A549 (cell line): ENCODE measurements at regions of chr6 and their contacts with region 1.

Region 1: DNA sequence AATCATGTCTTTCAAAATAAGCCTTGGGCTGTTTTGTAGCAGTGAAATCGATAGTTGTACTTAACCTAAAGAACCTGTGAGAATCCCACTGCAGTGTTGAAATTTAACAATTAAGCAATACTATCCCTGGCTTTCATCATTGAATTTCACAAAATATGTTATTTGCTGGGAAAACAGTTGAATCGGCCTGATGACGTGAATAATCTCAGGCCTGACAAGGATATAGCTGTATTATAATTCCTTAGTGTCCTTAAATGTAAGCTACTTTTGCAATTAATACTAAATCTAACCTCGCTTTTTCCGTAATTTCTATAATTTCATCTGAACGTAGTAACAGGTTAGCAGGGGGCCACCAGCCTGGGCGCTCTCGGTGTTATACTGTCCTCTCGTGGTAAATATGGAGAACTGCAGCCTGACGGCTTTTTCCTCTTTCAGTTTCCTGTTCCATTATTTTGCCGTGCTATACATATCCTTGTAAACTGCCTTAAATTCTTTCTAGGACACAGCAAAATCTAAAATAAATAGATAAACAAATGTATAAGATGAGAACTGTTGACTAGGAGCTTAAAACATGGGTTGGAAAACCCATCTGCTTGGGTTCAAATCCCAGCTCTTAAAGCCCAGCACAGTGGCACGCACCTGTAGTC is 24.0 kb downstream of the MTFR2 start:
- DNase-seq: peak; percentile 45 to 67
- ATAC-seq: peak; percentile 83 to 86
- H3K4me3 ChIP-seq: peak overlapping the region; percentile 30; the same call in 1 of the 3 replicates
- H3K27ac ChIP-seq: peak overlapping the region; percentile 87 to 93
- H3K4me1 ChIP-seq: peaks cover 22% of the 10 kb centered on the region
- CTCF ChIP-seq: peak; percentile 98
- EP300 ChIP-seq: peak; percentile 47 to 73; a peak in 3 of 5 replicates
- POLR2A ChIP-seq: no peak
- RAD21 ChIP-seq: peak; percentile 99

Region 2: GRCh38 chr6:135497412-135498269 is 728.5 kb before region 1 on chr6 and contains the start of gene AHI1:
- CTCF ChIA-PET with region 1: interaction called, 24 read pairs
- POLR2A ChIA-PET with region 1: no interaction called
- DNase-seq: peak; percentile 59 to 93
- ATAC-seq: peak; percentile 96 to 97
- H3K4me3 ChIP-seq: peak within 1 kb of the TSS; percentile 67
- H3K27ac ChIP-seq: peak within 1 kb of the TSS; percentile 93 to 95
- H3K4me1 ChIP-seq: peaks cover 12% of the 10 kb centered on the region; the same call in 2 of the 3 replicates
- CTCF ChIP-seq: no peak
- EP300 ChIP-seq: no peak
- POLR2A ChIP-seq: peak; percentile 78
- RAD21 ChIP-seq: no peak
- polyA plus RNA-seq, gene AHI1: 38.3 and 50.8 TPM in 2 replicates

Region 3: DNA sequence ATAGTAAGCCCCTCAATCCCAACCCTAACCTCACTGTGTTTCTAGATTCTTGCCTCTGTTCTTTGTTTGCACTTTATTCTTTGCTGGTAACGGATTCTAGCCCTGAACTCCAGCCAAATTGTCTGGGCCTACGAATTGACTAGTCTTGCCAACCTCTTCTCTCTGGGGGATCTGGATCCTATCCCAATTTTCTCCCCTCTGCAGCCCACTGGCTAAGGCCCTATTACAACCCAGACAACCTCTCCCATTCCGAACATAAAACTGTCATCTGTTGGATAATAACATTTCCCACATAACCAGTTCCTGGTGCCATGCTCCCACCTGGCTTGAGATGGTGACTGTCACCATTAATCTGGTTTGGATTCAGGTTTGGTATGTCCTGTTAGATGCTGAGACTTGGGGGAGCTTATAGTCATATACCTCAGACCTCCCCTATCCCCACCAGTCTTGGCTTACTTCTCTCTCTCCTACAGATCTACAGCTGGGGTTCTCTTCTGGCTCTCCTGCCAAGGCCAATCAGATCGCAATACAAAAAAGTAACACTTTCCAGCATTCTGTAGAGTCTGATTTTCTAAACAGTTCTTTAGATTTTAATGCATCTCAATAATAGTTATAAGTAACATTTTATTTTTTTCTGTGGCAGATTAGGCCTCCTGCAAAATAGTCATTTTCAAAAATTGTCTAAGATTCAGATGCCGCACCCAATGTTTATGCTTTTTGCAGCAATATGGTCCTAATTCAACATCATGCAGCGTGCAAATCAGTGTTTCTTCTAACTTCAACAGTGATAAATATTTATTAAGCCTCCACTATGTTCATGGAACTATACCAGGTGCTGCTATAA is 698.8 kb before region 1 on chr6:
- CTCF ChIA-PET with region 1: interaction called, 12 read pairs
- POLR2A ChIA-PET with region 1: no interaction called
- DNase-seq: no peak
- ATAC-seq: no peak
- H3K4me3 ChIP-seq: no peak overlapping the region
- H3K27ac ChIP-seq: no peak overlapping the region
- H3K4me1 ChIP-seq: peaks cover 12% of the 10 kb centered on the region; the same call in 2 of the 3 replicates
- CTCF ChIP-seq: no peak
- EP300 ChIP-seq: no peak
- POLR2A ChIP-seq: no peak
- RAD21 ChIP-seq: no peak

Region 4: DNA sequence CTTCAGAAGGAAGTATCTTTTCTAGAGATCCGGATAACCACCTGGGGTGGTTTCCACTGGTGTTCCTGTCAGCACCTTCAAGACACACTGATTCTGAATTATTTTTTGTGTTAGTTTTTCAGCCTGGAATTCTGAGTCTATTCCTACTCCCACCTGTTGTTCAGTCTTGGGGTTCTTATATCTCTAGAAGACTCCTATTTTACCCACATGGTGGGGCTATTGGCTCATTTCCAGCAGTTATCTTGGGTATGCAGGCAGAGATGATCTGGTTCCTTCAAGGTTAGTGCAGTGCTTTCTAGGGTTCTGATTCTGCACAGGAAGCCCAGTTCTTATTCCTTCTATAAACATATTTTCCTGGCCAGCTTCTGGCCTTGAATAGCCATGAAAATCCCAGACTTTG is 550.3 kb before region 1 on chr6:
- CTCF ChIA-PET with region 1: interaction called, 11 read pairs
- POLR2A ChIA-PET with region 1: no interaction called
- DNase-seq: peak; percentile 17 to 59
- ATAC-seq: peak; percentile 68 to 78; a peak in 4 of 6 replicates
- H3K4me3 ChIP-seq: no peak overlapping the region
- H3K27ac ChIP-seq: peak overlapping the region in 1 of 2 experiments; percentile 70; a peak in 3 of 6 replicates
- H3K4me1 ChIP-seq: peaks cover 22% of the 10 kb centered on the region
- CTCF ChIP-seq: peak; percentile 42; the same call in 1 of the 3 replicates
- EP300 ChIP-seq: no peak
- POLR2A ChIP-seq: no peak
- RAD21 ChIP-seq: peak; percentile 70 to 74

Region 5: DNA sequence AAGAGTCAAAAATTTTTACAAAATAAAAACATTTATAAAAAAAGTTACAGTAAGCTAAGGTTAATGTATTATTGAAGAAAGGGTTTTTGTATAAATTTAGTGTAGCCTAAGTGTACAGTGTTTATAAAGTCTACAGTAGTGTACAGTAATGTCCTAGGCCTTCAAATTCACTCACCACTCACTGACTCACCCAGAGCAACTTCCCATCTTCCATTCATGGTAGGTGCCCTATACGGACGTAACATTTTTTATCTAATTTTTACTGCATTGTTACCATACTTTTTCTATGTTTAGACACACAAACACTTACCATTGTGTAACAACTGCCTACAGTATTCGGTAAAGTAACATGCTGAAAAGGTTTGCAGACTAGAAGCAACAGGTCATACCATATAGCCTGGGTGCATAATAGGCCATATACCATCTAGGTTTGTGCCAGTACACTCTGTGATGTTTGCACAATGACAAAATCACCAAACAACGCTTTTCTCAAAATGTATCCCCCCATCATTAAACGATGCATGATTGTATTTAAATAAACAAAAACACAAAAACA is 18.0 kb after region 1 on chr6:
- CTCF ChIA-PET with region 1: interaction called, 14 read pairs
- POLR2A ChIA-PET with region 1: no interaction called
- DNase-seq: no peak
- ATAC-seq: no peak
- H3K4me3 ChIP-seq: no peak overlapping the region
- H3K27ac ChIP-seq: no peak overlapping the region
- H3K4me1 ChIP-seq: peaks cover 4% of the 10 kb centered on the region; the same call in 1 of the 3 replicates
- CTCF ChIP-seq: no peak
- EP300 ChIP-seq: no peak
- POLR2A ChIP-seq: no peak
- RAD21 ChIP-seq: no peak

Region 6: DNA sequence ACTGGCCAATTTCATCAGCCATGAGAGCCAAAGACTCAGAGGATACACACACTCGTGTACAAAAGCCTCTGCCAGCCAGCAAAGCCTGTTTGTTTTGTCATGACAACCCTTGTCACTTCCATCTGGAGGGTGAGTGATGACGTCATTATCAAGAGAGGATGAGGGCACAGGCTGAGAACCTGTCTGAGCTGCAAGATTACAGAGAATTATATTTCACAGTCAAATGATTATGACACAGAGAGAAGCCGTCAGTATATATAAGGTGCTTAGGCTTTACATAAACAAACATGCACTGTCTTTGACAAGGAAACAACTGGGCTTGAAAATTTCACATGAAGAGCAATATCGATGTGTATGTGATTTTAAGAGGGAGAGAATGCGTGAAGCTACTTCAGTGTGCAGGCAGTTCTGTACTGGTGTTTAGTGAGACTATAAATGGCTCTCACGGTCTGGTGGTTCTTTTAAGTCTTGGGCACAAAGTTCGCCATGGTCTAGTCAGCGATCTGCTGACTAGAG is 99.9 kb after region 1 on chr6:
- CTCF ChIA-PET with region 1: no interaction called
- POLR2A ChIA-PET with region 1: no interaction called
- DNase-seq: peak in 1 of 2 experiments; percentile 24
- ATAC-seq: peak in 1 of 2 experiments; percentile 21; a peak in 1 of 6 replicates
- H3K4me3 ChIP-seq: no peak overlapping the region
- H3K27ac ChIP-seq: no peak overlapping the region
- H3K4me1 ChIP-seq: no peaks in the 10 kb centered on the region
- CTCF ChIP-seq: no peak
- EP300 ChIP-seq: no peak
- POLR2A ChIP-seq: no peak
- RAD21 ChIP-seq: no peak